Activated T-helper 2 cell treated with anti-CD3 and anti-CD28 coated beads, Interferon-gamma antibody, Interleukin-2, Interleukin-4, amounts not matched to agents 10 μg/mL and 5 μg/mL and 100 μg/mL, durations not matched to agents 14 hours and 24 hours and 36 hours (primary cell): ENCODE measurements at regions of chr2 and their contacts with region 1.

Region 1: DNA sequence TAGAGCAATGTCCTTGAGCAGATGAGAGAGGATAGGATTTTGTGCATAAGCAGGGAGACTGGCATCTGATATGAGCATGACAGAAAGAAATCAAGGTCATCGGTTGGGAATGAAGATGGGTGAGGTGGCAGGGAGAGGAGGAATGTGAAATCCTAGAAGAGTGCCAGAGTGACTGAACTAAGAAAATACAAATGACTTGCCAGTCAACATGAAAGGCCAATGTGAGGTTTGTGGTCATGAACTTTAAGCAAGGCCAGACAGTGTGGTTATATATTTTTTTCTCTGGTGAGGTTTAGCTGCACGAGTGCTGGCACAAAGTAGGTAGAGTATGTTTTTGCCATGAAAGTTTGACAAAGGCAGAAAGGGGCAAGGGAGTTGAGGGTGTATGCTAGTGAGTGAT is 21.2 kb downstream of the QPCT start:
- DNase-seq: no peak
- H3K4me3 Mint-ChIP-seq: no peak overlapping the region
- H3K27ac Mint-ChIP-seq: no peak overlapping the region
- H3K4me1 Mint-ChIP-seq: peaks cover 24% of the 10 kb centered on the region
- H3K27me3 Mint-ChIP-seq: peaks cover 33% of the 10 kb centered on the region

Region 2: GRCh38 chr2:37324786-37325624 is 40.7 kb before region 1 on chr2 and contains the start of gene PRKD3:
- intact Hi-C with region 1: loop called (anchors 2 kb)
- DNase-seq: peak; percentile 34
- H3K4me3 Mint-ChIP-seq: peak within 1 kb of the TSS; percentile 94
- H3K27ac Mint-ChIP-seq: peak within 1 kb of the TSS; percentile 90
- H3K4me1 Mint-ChIP-seq: peaks cover 33% of the 10 kb centered on the region
- H3K27me3 Mint-ChIP-seq: peaks cover 51% of the 10 kb centered on the region
- total RNA-seq, gene PRKD3: 11.9 and 14.0 TPM in 2 replicates

Region 3: DNA sequence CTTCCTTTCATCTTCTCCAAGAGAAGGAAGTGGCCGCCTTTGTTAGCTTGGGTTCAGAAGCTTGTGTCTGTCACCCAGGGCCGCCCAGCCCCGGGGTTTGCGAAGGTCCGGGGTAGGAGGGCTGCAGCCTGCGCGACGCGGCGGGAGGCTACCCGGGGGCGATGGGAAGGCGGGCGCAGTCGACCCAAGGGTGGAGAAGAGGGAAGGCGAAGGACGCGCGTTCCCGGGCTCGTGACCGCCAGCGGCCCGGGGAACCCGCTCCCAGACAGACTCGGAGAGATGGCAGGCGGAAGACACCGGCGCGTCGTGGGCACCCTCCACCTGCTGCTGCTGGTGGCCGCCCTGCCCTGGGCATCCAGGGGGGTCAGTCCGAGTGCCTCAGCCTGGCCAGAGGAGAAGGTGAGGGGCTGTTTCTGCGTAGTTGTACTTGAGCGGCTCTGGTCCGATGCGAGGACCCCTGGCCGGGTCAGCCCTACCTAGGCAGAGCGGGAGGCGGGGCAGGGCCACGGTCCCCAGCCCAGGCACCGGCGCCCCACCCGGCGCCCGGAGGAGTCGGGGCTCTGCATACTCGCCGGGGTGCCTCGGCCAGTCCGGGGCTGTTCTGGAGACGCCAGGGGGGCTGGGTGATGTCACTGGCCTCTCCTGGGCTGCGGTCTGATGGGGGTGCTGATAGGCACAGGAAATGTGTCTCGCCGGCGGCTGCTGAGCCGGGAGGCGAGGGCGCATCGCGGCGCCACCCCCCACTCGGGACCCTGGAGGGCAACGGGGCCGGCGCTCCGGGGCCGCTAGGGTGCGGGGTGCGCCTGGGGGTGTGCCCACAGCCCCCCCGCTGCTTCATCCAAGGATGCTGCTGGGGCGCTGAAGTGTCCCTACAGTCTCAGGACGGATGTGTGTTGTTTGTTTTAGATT is 21.0 kb before region 1 on chr2 and contains the start of gene QPCT:
- intact Hi-C with region 1: loop called (anchors 2 kb)
- DNase-seq: peak; percentile 29
- H3K4me3 Mint-ChIP-seq: peak within 1 kb of the TSS; percentile 70
- H3K27ac Mint-ChIP-seq: no peak within 1 kb of the TSS
- H3K4me1 Mint-ChIP-seq: peaks cover 15% of the 10 kb centered on the region
- H3K27me3 Mint-ChIP-seq: peaks cover 76% of the 10 kb centered on the region
- total RNA-seq, gene QPCT: 0.48 and 0.71 TPM in 2 replicates

Region 4: GRCh38 chr2:38474715-38475566 is 1109.3 kb after region 1 on chr2:
- intact Hi-C with region 1: loop called (anchors 5 kb)
- DNase-seq: no peak
- H3K4me3 Mint-ChIP-seq: no peak overlapping the region
- H3K27ac Mint-ChIP-seq: peak overlapping the region; percentile 18
- H3K4me1 Mint-ChIP-seq: peaks cover 28% of the 10 kb centered on the region
- H3K27me3 Mint-ChIP-seq: peaks cover 22% of the 10 kb centered on the region